Activated CD4-positive, alpha-beta T cell treated with anti-CD3 and anti-CD28 coated beads, Interleukin-2, amount 10 ng/mL, durations not matched to agents 7 days and 5 days (primary cell): ENCODE measurements at regions of chr9 and their contacts with region 1.

Region 1: GRCh38 chr9:133701862-133702797 is 36.0 kb downstream of the SARDH start:
- DNase-seq: peak; percentile 71
- H3K4me3 Mint-ChIP-seq: peak overlapping the region; percentile 74
- H3K27ac Mint-ChIP-seq: peak overlapping the region; percentile 94
- H3K4me1 Mint-ChIP-seq: peaks cover 43% of the 10 kb centered on the region
- H3K27me3 Mint-ChIP-seq: peaks cover 2% of the 10 kb centered on the region

Region 2: DNA sequence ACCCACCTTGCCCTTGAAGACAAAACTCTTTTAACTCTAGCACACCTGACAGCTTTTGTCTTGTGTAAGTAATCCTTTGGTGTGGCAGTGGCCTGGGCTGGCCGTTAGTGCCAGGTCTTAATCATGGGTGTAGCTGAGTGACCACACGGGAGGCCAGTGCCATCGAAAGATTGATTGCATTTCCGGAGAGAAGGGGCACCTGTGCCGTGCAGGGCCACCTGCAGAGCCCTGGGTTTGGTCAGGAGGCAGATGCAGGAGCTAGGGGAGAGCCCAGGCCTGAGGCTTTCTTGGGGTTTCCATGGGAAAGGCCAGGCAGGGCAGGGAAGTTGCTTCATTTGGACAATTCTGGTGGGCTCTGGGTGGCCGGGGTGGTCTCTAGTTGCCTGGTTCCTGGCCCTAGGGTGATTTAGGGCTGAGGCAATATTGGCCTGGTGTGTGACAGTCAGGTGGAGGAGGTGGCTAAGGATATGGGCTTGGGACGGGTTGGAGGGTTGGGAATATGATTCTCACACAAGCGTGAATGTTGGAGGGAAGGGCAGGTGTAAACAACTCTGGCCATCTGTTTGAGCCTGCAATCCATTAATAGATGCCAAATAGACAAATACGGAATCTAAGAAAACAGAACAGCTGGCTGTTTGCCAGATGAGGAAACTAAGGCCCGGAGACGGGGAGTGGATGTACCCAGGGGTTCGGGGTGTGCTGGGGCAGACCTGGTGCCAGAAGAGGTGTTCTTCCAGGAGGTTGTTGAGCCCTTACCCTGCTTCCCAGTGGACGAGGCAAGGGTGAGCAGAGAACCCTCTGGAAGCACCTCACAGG is 61.3 kb before region 1 on chr9:
- CTCF ChIA-PET with region 1: no interaction called
- POLR2A ChIA-PET with region 1: no interaction called
- DNase-seq: no peak
- H3K4me3 Mint-ChIP-seq: no peak overlapping the region
- H3K27ac Mint-ChIP-seq: no peak overlapping the region
- H3K4me1 Mint-ChIP-seq: no peaks in the 10 kb centered on the region
- H3K27me3 Mint-ChIP-seq: no peaks in the 10 kb centered on the region

Region 3: DNA sequence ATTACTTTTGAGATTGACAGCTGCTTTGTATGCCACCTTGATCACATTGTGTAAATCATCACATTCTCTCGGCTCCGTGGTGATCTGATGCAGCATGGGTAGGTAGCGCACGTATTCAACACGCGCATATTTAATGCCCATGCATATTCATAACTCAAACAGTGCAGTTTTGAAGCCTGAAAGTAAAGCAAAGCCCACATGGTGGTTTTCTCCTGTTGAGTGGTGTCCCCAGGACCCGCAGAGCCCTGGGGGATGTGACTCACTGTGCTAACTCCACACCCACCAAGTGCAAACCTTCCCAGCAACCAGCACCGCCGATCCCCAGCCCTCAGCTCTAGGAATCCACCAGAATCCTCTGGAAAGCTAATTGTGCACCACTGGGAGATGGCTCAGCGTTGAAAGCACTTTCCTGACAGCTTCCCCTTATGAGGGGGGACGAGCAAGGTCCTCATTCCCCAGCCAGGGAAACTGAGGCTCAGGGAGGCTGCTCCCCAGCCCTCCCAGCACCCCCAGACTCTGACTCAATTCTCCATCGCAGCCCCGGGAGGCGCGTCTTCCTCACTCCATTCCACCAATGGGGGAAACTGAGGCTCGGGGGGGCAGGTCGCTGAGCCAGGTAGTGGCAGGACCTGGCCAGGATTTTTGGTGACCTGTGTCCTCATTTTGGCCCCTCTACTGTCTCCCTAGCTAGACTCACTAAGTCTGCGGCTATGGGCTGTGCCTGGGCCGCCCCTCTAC is 10.3 kb before region 1 on chr9:
- CTCF ChIA-PET with region 1: interaction called, 16 read pairs
- POLR2A ChIA-PET with region 1: no interaction called
- DNase-seq: no peak
- H3K4me3 Mint-ChIP-seq: no peak overlapping the region
- H3K27ac Mint-ChIP-seq: no peak overlapping the region
- H3K4me1 Mint-ChIP-seq: peaks cover 8% of the 10 kb centered on the region
- H3K27me3 Mint-ChIP-seq: peaks cover 4% of the 10 kb centered on the region